Activated T-helper 1 cell treated with anti-CD3 and anti-CD28 coated beads, Interleukin-12 subunit alpha, Interleukin-12 subunit beta, Interleukin-2, Interleukin-4 antibody, amounts not matched to agents 30 ng/mL and 10 ng/mL and 1 ng/mL, durations not matched to agents 14 hours and 24 hours and 36 hours (primary cell): ENCODE measurements at regions of chr12 and their contacts with region 1.

Region 1: GRCh38 chr12:12070674-12071656 is at the start of gene BCL2L14:
- DNase-seq: peak; percentile 8
- H3K4me3 Mint-ChIP-seq: peak within 1 kb of the TSS; percentile 88
- H3K27ac Mint-ChIP-seq: peak within 1 kb of the TSS; percentile 94
- H3K4me1 Mint-ChIP-seq: peaks cover 49% of the 10 kb centered on the region
- H3K27me3 Mint-ChIP-seq: peaks cover 3% of the 10 kb centered on the region
- total RNA-seq, gene BCL2L14: 10.4 and 11.0 TPM in 2 replicates

Region 2: DNA sequence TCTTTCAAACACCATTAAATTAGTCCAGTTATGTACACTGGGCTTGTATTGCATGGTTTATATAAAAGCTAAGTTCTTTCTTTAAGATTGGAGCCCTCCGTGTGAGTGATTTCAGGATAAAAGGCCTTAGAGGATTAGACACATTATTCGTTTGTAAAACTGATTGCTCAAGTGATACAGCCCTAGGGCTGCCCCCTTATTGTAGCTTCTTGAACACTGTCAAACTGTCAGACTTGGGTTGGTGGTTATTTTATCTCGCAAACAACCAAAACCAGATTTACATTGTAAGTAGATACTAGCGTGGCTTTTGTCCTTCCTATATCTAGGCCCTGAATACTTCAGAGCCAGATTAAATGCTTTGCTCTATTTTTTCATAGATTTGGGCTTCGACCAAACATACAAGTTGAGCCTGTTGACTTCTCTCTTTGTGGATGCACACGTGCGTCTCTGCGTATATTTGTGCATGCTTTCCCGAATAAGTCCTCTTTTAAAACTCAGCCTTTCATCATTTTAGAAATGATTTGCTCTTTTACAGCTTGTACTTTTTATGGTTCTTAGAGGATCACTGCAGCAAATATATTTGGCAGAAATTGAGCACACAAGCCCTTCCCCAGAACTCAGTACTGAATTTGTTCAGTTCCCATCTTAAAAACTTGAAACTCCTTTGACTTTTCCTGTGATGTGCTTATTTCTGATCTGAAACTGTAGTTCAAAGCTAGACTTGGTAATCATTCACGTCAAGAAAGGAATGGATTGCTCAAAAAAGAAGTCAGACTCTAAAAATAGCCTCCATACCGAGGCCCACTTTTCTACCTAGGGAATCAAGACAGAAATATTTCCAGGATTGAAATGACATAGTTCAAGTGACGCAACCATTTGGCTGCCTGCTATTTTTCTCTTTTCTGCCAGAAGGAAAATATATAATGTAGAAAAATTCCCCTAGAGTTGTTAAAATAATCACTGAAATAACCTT is 292.0 kb before region 1 on chr12:
- intact Hi-C with region 1: no loop called
- DNase-seq: no peak
- H3K4me3 Mint-ChIP-seq: peak overlapping the region; percentile 53
- H3K27ac Mint-ChIP-seq: peak overlapping the region; percentile 90
- H3K4me1 Mint-ChIP-seq: peaks cover 88% of the 10 kb centered on the region
- H3K27me3 Mint-ChIP-seq: no peaks in the 10 kb centered on the region

Region 3: GRCh38 chr12:11969437-11970154 is 101.4 kb before region 1 on chr12:
- intact Hi-C with region 1: no loop called
- DNase-seq: no peak
- H3K4me3 Mint-ChIP-seq: no peak overlapping the region
- H3K27ac Mint-ChIP-seq: no peak overlapping the region
- H3K4me1 Mint-ChIP-seq: peaks cover 36% of the 10 kb centered on the region
- H3K27me3 Mint-ChIP-seq: no peaks in the 10 kb centered on the region

Region 4: GRCh38 chr12:12229556-12230092 is 158.7 kb after region 1 on chr12:
- intact Hi-C with region 1: no loop called
- DNase-seq: no peak
- H3K4me3 Mint-ChIP-seq: no peak overlapping the region
- H3K27ac Mint-ChIP-seq: no peak overlapping the region
- H3K4me1 Mint-ChIP-seq: no peaks in the 10 kb centered on the region
- H3K27me3 Mint-ChIP-seq: peaks cover 16% of the 10 kb centered on the region

Region 5: DNA sequence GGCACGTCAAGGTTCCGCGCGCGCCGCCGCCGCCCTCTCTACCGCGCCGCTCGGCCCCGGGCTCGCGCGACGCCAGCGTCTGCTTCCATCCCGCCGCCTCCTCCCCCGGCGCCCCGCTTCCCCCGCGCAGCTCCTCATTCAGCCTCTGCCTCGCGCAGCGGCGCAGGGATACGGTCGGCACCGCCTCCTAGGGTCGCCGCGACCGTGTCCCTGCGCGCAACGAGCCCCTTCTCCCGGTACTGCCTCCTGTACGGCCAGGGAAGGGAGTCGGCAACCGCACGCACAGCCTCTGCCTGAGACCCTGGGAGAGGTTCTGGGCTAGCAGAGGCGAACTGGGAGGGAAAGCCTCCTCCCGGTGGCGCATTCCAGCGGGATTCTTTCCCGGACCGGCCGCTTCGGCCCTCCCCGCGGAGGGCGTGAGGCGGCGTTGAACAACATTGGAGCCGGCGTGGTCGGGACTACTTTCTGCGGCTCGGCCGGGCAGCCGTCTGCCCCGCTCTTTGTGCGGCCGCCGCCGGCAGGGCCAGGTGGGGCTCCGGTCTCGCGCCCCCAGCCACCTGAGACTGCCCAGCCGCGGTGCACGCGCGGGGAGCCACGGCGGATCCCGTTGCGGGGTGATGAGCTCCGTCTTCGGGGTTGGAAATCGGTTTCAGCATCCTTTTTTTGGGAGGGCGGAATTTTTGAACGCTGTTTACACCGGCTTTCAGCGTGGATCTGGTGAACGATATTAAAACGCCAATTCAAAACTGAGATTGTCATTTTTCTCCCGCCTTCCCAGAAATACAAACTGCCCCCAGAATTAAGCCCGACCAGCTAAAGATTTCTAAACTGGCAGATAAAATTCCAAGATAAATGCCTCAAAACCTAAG is 196.1 kb after region 1 on chr12 and contains the start of gene LRP6:
- intact Hi-C with region 1: loop called (anchors 5 kb)
- DNase-seq: peak; percentile 46
- H3K4me3 Mint-ChIP-seq: peak within 1 kb of the TSS; percentile 82
- H3K27ac Mint-ChIP-seq: peak within 1 kb of the TSS; percentile 44
- H3K4me1 Mint-ChIP-seq: peaks cover 14% of the 10 kb centered on the region
- H3K27me3 Mint-ChIP-seq: peaks cover 46% of the 10 kb centered on the region
- total RNA-seq, gene LRP6: 5.5 and 5.6 TPM in 2 replicates

Region 6: DNA sequence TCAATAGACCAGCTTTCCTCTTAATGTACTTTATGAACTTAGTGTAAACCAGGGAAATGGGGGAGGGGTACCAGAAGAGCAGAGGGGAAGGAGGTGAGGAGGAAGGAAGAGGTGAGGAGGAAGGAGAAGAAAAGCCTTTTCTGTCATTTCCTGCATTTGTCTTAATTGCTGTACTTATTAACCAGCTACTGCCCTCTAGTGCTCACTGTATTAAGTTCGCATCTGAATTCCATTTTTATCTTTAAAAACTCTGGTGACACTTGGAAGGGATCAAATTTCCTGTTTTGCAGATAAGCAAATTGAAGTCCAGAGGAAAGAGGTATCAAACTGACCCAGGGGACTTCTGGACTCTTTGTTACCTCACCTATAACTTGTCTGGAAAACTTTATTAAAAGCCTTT is 256.8 kb after region 1 on chr12:
- intact Hi-C with region 1: no loop called
- DNase-seq: no peak
- H3K4me3 Mint-ChIP-seq: no peak overlapping the region
- H3K27ac Mint-ChIP-seq: no peak overlapping the region
- H3K4me1 Mint-ChIP-seq: peaks cover 13% of the 10 kb centered on the region
- H3K27me3 Mint-ChIP-seq: peaks cover 2% of the 10 kb centered on the region